ENCODE measurements at regions of chr20 and their contacts with region 1.

Region 1: GRCh38 chr20:32779500-32780211 is 17.5 kb downstream of the DNMT3B start:
- DNase-seq: no peak
- H3K4me3 ChIP-seq: no peak overlapping the region
- H3K27ac ChIP-seq: no peak overlapping the region
- H3K27me3 ChIP-seq: no peaks in the 10 kb centered on the region
- CTCF ChIP-seq: no peak

Region 2: DNA sequence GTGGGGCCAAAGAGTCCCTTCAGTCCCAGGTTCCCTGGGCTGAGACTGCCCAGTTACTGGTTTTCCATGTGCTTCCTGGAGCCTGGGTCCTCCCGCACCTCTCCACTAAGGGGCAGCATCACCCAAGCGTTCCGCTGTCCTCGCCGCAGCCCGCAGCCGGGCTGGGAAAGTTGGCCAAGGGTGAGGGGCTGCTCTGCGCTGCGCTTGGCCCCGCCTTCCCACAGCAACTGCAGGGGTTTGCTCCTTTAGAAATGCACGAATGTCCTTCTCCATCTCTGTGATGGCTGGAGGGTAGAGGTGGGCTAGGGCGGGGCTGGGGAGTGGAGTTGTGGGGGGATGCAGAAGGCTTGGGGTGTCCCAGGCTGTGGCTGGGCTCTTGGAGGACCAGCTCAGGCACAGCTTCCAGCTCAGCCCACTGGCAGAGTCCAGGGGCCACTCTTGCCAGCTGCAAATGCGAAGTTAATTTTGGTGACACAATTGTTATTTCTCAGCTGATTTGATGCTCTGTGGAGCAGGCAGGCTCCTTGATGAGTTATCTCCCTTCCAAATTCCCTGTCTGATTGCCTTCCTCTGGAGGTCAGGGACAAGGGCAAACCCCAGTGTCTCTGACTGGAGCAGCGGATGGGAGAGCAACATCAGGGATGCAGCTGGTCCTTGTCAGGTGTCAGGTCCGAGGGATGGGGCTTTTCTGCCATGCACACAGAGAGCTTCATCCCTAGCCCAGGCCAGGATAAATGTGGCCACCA is 257.7 kb before region 1 on chr20:
- CTCF ChIA-PET with region 1: interaction called, 24 read pairs
- POLR2A ChIA-PET with region 1: no interaction called
- DNase-seq: no peak
- H3K4me3 ChIP-seq: no peak overlapping the region
- H3K27ac ChIP-seq: no peak overlapping the region
- H3K27me3 ChIP-seq: no peaks in the 10 kb centered on the region
- CTCF ChIP-seq: peak; percentile 88

Region 3: DNA sequence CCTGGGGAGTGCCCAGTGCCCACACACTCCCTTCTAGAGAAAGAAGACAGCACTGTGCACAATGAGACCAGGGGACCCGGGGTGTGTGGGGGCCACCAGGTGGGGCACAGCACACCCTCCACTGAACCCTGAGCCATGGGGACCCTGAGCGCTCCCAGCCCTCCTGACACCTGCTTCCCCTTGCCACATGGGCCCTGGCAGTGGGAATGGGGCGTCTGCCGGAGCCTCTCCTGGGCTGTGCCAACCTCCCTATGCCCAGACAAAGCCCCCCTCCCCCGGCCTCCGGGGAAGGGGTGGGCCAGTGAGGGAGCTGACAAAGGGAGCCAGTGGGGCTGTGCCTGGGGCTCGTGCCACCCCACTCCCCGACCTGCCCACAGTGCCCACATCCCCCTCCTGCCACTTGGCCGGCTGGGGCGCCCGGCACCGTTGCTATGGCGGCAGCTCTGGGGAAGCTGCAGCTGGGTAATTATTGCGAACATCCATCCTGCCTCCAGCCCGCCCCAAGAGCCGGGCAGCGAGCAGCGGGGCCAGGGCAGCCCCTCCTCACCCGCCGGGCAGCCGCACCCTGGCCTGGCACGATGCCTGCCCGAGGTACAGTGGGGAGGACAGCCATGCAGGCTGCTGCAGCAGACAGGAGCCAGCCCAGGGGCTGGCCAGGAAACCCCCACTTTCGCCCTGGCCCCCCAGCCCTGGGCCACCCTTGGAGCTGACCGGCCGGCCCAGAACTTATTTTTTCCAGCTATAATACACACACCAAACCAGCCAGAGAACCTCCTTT is 152.6 kb before region 1 on chr20:
- CTCF ChIA-PET with region 1: no interaction called
- POLR2A ChIA-PET with region 1: no interaction called
- DNase-seq: no peak
- H3K4me3 ChIP-seq: no peak overlapping the region
- H3K27ac ChIP-seq: no peak overlapping the region
- H3K27me3 ChIP-seq: peaks cover 16% of the 10 kb centered on the region
- CTCF ChIP-seq: no peak

Region 4: GRCh38 chr20:32674362-32674789 is 105.3 kb before region 1 on chr20:
- CTCF ChIA-PET with region 1: interaction called, 280 read pairs
- POLR2A ChIA-PET with region 1: no interaction called
- DNase-seq: no peak
- H3K4me3 ChIP-seq: no peak overlapping the region
- H3K27ac ChIP-seq: no peak overlapping the region
- H3K27me3 ChIP-seq: no peaks in the 10 kb centered on the region
- CTCF ChIP-seq: peak; percentile 83

Region 5: GRCh38 chr20:32762149-32762753 is 17.4 kb before region 1 on chr20 and contains the start of gene DNMT3B:
- CTCF ChIA-PET with region 1: interaction called, 32 read pairs
- POLR2A ChIA-PET with region 1: no interaction called
- DNase-seq: peak; percentile 34
- H3K4me3 ChIP-seq: peak within 1 kb of the TSS; percentile 84
- H3K27ac ChIP-seq: no peak within 1 kb of the TSS
- H3K27me3 ChIP-seq: no peaks in the 10 kb centered on the region
- CTCF ChIP-seq: 0 out of 2 replicates have a peak, but pooled peaks have one; percentile 11
- polyA plus RNA-seq, gene DNMT3B: 1.8 and 1.9 TPM in 2 replicates

Region 6: GRCh38 chr20:32767418-32768198 is 12.0 kb before region 1 on chr20:
- CTCF ChIA-PET with region 1: interaction called, 32 read pairs
- POLR2A ChIA-PET with region 1: no interaction called
- DNase-seq: no peak
- H3K4me3 ChIP-seq: no peak overlapping the region
- H3K27ac ChIP-seq: no peak overlapping the region
- H3K27me3 ChIP-seq: no peaks in the 10 kb centered on the region
- CTCF ChIP-seq: no peak

Region 7: GRCh38 chr20:32789896-32790750 is 10.5 kb after region 1 on chr20:
- CTCF ChIA-PET with region 1: interaction called, 26 read pairs
- POLR2A ChIA-PET with region 1: no interaction called
- DNase-seq: peak; percentile 41
- H3K4me3 ChIP-seq: no peak overlapping the region
- H3K27ac ChIP-seq: no peak overlapping the region
- H3K27me3 ChIP-seq: no peaks in the 10 kb centered on the region
- CTCF ChIP-seq: peak; percentile 99

Region 8: DNA sequence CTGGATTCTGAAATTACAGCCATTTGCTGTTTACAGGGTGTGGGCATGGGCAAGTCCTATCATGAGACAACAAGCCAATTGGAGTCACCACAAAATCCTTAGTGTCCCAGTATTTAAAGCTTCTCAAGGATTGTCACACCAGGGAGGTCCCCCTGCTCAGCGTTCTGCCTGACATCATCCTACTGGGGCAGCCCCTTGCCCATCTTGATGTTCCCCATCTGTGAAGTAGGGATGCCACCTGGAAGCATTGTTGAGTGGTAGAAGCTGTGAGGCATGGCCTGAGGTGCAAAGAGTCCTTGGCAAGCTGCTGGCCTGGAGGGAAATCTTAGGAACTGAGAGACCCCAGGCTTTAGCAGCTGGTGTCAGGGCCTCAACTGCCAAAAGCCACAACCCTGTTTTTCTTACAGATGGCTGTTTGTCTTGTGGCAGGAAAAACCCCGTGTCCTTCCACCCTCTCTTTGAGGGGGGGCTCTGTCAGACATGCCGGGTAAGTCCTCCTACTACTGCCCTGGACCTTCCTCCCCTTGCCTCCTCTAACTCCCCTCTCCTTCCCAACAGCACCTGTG is 16.8 kb after region 1 on chr20:
- CTCF ChIA-PET with region 1: interaction called, 10 read pairs
- POLR2A ChIA-PET with region 1: no interaction called
- DNase-seq: no peak
- H3K4me3 ChIP-seq: no peak overlapping the region
- H3K27ac ChIP-seq: no peak overlapping the region
- H3K27me3 ChIP-seq: no peaks in the 10 kb centered on the region
- CTCF ChIP-seq: no peak